Endothelial cell of umbilical vein (primary cell): ENCODE measurements at regions of chr17 and their contacts with region 1.

Region 1: GRCh38 chr17:7329374-7329996 is 350 bp upstream of the NEURL4 start:
- DNase-seq: peak; percentile 99
- H3K4me3 ChIP-seq: peak overlapping the region; percentile 80 to 86 (median 81)
- H3K27ac ChIP-seq: peak overlapping the region; percentile 71
- H3K4me1 ChIP-seq: peaks cover 10% of the 10 kb centered on the region
- H3K27me3 ChIP-seq: peaks cover 0 to 2% of the 10 kb centered on the region in 2 experiments
- CTCF ChIP-seq: peak in 1 of 2 donors; percentile 6
- POLR2A ChIP-seq: no peak

Region 2: DNA sequence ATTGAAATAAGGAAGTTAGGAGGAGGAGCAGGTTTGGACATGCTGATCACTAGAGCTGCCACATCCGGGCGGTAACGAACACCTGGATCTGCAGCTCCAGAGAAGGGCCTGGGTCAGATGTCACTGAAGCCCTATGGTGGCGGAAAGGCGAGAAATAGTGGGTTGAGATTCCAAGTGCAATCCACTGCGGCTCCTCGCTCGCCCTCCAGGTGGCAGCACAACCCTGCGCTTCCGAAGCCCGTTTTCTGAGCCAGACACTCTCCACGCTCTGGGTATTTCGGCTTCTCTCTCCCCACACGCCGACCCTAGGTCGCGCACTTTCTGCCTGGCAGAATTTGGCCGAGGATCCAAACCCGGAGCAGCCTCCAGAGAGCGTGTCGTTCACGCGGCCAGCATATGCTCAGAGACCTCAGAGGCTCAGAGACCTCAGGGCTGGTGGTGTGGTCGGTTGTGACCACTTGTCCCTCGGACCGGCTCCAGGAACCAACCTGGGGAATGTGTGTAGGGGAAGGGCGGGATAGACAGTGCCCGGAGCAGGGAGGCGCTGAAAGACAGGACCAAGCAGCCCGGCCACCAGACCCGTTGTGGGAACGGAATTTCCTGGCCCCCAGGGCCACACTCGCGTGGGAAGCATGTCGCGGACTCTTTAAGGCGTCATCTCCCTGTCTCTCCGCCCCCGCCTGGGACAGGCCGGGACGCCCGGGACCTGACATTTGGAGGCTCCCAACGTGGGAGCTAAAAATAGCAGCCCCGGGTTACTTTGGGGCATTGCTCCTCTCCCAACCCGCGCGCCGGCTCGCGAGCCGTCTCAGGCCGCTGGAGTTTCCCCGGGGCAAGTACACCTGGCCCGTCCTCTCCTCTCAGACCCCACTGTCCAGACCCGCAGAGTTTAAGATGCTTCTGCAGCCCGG is 48.7 kb before region 1 on chr17:
- CTCF ChIA-PET with region 1: interaction called, 5 read pairs
- POLR2A ChIA-PET with region 1: interaction called, 5 read pairs
- dilution Hi-C with region 1: no loop called
- intact Hi-C with region 1: loop called (anchors 1 kb)
- DNase-seq: peak; percentile 77
- H3K4me3 ChIP-seq: peak overlapping the region in 2 of 3 experiments; percentile 13 to 33
- H3K27ac ChIP-seq: no peak overlapping the region
- H3K4me1 ChIP-seq: peaks cover 9% of the 10 kb centered on the region
- H3K27me3 ChIP-seq: peaks cover 4 to 5% of the 10 kb centered on the region in 2 experiments
- CTCF ChIP-seq: peak; percentile 92 to 96
- POLR2A ChIP-seq: no peak

Region 3: DNA sequence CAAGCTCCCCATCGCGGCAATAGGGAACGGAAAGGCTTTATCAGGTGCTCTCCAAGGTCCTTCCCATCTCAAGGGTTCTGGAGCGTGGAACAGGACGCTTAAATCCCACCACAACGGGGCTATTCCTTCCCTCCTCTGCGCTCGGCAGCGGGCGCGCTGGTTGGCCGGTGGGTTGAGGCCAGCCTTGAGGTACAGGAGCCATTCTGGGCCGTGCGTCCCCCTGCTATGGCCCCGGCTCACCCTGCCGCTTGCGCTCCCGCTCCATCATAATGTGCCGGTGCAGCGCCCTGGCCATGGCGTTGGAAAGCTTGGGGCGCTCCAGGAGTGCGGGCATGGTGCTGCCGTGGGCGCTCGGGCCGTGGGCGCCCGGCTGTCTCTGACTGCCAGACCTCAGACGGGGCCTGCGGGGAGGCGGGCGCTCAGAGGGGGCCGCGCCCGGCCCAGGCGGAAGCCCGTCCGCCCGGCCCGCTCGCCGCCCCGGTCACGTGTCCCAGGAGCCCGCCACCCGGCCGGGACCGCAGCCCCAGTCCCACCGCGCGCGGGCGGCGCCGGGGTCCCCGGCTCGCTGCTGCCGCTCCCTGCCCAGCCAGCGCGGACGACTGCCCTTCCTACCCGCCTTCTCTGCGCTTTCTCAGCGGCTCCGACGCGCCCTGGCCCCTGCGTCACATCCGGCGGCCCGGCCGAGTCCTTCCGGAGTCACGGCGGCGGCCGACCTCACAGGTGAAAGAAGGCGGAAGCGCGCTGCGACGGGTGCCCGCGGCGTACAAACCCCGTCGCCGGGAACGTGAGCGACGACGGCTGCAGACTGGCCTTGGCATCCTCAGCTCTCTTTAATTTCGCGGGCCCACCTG is 14.5 kb before region 1 on chr17 and contains the start of gene GPS2:
- CTCF ChIA-PET with region 1: interaction called, 10 read pairs
- POLR2A ChIA-PET with region 1: interaction called, 5 read pairs
- dilution Hi-C with region 1: no loop called
- intact Hi-C with region 1: loop called (anchors 1 kb)
- DNase-seq: peak; percentile 84
- H3K4me3 ChIP-seq: peak within 1 kb of the TSS; percentile 12 to 87 (median 64)
- H3K27ac ChIP-seq: peak within 1 kb of the TSS; percentile 65
- H3K4me1 ChIP-seq: peaks cover 27% of the 10 kb centered on the region
- H3K27me3 ChIP-seq: no peaks in the 10 kb centered on the region
- CTCF ChIP-seq: no peak
- POLR2A ChIP-seq: peak; percentile 76
- total RNA-seq, gene GPS2: 51.6 and 61.3 TPM in 2 replicates

Region 4: GRCh38 chr17:7344399-7344798 is 14.9 kb after region 1 on chr17:
- CTCF ChIA-PET with region 1: interaction called, 13 read pairs
- POLR2A ChIA-PET with region 1: no interaction called
- dilution Hi-C with region 1: no loop called
- intact Hi-C with region 1: loop called (anchors 1 kb)
- DNase-seq: no peak
- H3K4me3 ChIP-seq: no peak overlapping the region
- H3K27ac ChIP-seq: no peak overlapping the region
- H3K4me1 ChIP-seq: no peaks in the 10 kb centered on the region
- H3K27me3 ChIP-seq: no peaks in the 10 kb centered on the region
- CTCF ChIP-seq: no peak
- POLR2A ChIP-seq: no peak

Region 5: DNA sequence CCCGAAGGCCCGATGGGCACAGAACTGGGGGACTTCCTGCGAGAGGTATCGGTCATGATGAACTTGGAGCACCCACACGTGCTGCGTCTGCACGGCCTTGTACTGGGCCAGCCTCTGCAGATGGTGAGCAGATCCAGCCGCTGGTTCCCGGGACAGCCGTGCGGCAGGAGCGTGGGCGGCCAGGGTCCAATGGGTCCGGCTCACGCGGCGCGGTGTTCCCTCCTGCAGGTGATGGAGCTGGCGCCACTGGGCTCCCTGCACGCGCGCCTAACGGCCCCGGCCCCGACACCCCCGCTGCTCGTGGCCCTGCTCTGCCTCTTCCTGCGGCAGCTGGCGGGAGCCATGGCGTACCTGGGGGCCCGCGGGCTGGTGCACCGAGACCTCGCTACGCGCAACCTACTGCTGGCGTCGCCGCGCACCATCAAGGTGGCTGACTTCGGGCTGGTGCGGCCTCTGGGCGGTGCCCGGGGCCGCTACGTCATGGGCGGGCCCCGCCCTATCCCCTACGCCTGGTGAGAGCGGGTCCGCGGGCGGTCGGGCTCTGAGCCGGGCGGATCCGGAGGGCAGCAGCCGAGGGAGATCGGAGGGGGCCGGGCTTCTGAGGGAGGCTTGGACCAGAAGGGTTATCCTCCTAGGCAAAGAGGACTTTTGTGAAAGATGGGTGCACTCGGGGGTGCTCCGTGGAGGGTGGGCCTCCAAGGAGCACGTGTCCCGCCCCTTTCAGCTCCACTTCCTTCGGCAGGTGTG is 54.4 kb after region 1 on chr17:
- CTCF ChIA-PET with region 1: no interaction called
- POLR2A ChIA-PET with region 1: no interaction called
- dilution Hi-C with region 1: no loop called
- intact Hi-C with region 1: no loop called
- DNase-seq: peak; percentile 39
- H3K4me3 ChIP-seq: peak overlapping the region; percentile 17 to 35 (median 34)
- H3K27ac ChIP-seq: no peak overlapping the region
- H3K4me1 ChIP-seq: peaks cover 5% of the 10 kb centered on the region
- H3K27me3 ChIP-seq: peaks cover 25 to 33% of the 10 kb centered on the region in 2 experiments
- CTCF ChIP-seq: no peak
- POLR2A ChIP-seq: peak; percentile 6

Region 6: DNA sequence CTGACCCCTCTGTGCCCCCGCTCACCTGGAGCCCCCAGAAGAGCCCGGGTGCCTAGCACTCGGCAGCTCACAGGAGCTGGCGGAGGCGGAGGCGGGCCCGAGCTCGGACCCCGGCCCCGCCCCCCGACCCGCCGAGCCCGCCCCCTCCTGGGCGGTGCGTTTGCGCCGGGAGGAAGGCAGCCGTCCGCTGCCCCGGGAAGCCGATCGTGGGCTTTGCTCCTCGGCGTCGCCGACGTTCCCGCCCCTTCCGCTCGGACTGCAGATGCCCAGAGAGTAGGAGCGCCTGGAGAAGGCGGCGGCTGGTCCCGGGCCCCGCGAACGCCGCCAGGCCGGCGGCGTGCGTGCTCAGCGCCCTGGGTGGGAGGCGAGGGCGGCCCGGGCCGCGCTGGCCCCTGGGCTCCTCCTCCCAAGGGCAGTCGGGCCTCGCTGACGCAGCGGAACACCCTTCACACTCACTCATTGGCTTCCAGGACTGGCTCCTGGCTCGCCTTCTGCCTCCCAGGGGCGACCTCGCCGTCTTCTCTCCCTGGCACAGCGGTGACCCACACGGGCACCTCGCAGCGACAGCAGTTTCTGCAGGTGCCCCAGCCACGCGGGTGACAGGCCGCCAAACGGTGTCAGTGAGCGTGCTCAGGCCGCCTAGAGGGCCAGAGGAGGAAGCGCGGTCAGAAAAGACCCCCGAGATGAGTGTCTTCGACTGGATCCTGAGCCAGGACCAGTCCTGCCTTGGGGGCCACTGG is 65.1 kb after region 1 on chr17 and contains the start of gene PLSCR3:
- CTCF ChIA-PET with region 1: no interaction called
- POLR2A ChIA-PET with region 1: no interaction called
- dilution Hi-C with region 1: no loop called
- intact Hi-C with region 1: no loop called
- DNase-seq: peak; percentile 92
- H3K4me3 ChIP-seq: peak within 1 kb of the TSS; percentile 58 to 93 (median 92)
- H3K27ac ChIP-seq: peak within 1 kb of the TSS; percentile 45
- H3K4me1 ChIP-seq: peaks cover 16% of the 10 kb centered on the region
- H3K27me3 ChIP-seq: no peaks in the 10 kb centered on the region
- CTCF ChIP-seq: peak in 1 of 2 donors; percentile 55
- POLR2A ChIP-seq: peak; percentile 90
- total RNA-seq, gene PLSCR3: 54.5 and 59.9 TPM in 2 replicates